Activated naive CD4-positive, alpha-beta T cell treated with anti-CD3 and anti-CD28 coated beads, Interleukin-2, amount 10 ng/mL, durations not matched to agents 7 days and 5 days (primary cell): ENCODE measurements at regions of chr20 and their contacts with region 1.

Region 1: GRCh38 chr20:41136680-41137613 is at the start of gene PLCG1:
- DNase-seq: peak; percentile 88
- H3K4me3 Mint-ChIP-seq: peak within 1 kb of the TSS; percentile 84
- H3K27ac Mint-ChIP-seq: peak within 1 kb of the TSS; percentile 92
- H3K4me1 Mint-ChIP-seq: peaks cover 54% of the 10 kb centered on the region
- H3K27me3 Mint-ChIP-seq: no peaks in the 10 kb centered on the region

Region 2: GRCh38 chr20:40990542-40991120 is 146.3 kb before region 1 on chr20:
- CTCF ChIA-PET with region 1: interaction called, 20 read pairs
- DNase-seq: peak; percentile 80
- H3K4me3 Mint-ChIP-seq: no peak overlapping the region
- H3K27ac Mint-ChIP-seq: peak overlapping the region; percentile 71
- H3K4me1 Mint-ChIP-seq: peaks cover 42% of the 10 kb centered on the region
- H3K27me3 Mint-ChIP-seq: peaks cover 2% of the 10 kb centered on the region

Region 3: GRCh38 chr20:41125530-41126457 is 11.2 kb before region 1 on chr20:
- CTCF ChIA-PET with region 1: interaction called, 12 read pairs
- DNase-seq: no peak
- H3K4me3 Mint-ChIP-seq: no peak overlapping the region
- H3K27ac Mint-ChIP-seq: peak overlapping the region; percentile 13
- H3K4me1 Mint-ChIP-seq: peaks cover 10% of the 10 kb centered on the region
- H3K27me3 Mint-ChIP-seq: no peaks in the 10 kb centered on the region

Region 4: DNA sequence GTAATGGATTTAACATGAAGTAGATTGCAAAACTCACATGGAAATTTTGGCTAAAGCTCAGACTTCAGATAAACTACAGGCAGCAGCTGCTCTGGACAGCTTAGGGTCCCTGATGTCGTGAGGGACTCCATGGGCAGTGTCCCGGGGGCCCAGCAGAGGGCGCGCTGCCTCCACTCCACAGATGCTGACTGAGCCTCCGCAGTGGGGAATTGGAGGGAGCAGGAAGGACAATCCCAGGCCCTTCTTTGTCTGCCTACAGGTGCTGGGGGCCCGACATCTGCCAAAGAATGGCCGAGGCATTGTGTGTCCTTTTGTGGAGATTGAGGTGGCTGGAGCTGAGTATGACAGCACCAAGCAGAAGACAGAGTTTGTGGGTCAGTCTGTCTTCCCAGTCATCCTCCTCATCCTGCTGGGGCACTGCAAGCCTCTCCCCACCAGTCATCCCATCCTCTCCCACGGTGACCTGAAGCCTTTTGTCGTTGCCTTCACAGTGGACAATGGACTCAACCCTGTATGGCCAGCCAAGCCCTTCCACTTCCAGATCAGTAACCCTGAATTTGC is 36.3 kb after region 1 on chr20:
- CTCF ChIA-PET with region 1: interaction called, 26 read pairs
- DNase-seq: peak; percentile 73
- H3K4me3 Mint-ChIP-seq: no peak overlapping the region
- H3K27ac Mint-ChIP-seq: peak overlapping the region; percentile 75
- H3K4me1 Mint-ChIP-seq: peaks cover 22% of the 10 kb centered on the region
- H3K27me3 Mint-ChIP-seq: no peaks in the 10 kb centered on the region

Region 5: GRCh38 chr20:41218466-41218865 is 81.5 kb after region 1 on chr20:
- CTCF ChIA-PET with region 1: interaction called, 10 read pairs
- DNase-seq: no peak
- H3K4me3 Mint-ChIP-seq: no peak overlapping the region
- H3K27ac Mint-ChIP-seq: no peak overlapping the region
- H3K4me1 Mint-ChIP-seq: no peaks in the 10 kb centered on the region
- H3K27me3 Mint-ChIP-seq: peaks cover 6% of the 10 kb centered on the region

Region 6: DNA sequence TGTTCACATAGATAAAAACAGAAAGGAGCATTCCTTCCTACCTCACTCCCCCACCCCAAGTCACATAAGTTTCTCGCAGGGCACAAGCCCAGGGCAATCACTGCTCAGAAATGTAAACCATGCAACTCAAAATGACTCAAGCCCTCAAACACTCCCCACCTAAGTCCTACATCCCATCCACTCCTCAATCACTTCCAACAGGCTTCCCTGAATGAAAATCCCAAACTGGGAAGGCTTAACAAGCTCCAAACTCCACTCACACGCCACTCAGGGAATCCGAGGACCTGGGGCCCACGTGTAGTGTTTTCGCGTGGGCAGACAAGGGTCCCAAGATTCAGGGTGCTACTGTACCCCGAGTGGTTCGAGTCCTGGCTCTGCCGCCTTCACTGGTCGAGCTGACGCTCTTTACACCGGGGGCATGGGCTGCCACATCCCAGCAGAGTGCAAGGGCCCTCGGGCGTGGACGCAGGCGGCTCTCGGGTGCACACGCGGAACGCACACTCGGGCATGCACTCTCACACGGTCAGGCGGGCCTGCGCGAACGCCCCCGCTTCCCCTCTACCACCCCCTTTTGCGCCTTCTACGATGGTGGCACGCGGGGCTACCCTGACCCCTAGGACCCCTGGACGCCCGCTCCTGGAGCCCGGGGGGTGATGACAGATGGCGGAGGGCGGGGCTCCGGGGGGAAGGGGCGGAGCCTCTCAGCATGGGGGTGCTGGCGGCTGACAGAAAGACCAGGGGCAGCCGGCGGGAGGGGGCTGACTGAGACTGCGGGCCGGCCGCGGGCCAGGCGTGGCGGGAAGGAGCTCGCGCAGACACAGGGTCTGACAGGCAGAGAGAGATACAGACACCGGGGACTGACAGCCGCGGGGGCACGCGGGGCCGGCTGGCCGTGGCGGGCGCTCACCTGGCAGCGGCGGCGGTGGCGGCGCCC is 179.9 kb after region 1 on chr20:
- CTCF ChIA-PET with region 1: no interaction called
- DNase-seq: peak; percentile 86
- H3K4me3 Mint-ChIP-seq: peak overlapping the region; percentile 73
- H3K27ac Mint-ChIP-seq: peak overlapping the region; percentile 83
- H3K4me1 Mint-ChIP-seq: peaks cover 28% of the 10 kb centered on the region
- H3K27me3 Mint-ChIP-seq: peaks cover 18% of the 10 kb centered on the region

Region 7: DNA sequence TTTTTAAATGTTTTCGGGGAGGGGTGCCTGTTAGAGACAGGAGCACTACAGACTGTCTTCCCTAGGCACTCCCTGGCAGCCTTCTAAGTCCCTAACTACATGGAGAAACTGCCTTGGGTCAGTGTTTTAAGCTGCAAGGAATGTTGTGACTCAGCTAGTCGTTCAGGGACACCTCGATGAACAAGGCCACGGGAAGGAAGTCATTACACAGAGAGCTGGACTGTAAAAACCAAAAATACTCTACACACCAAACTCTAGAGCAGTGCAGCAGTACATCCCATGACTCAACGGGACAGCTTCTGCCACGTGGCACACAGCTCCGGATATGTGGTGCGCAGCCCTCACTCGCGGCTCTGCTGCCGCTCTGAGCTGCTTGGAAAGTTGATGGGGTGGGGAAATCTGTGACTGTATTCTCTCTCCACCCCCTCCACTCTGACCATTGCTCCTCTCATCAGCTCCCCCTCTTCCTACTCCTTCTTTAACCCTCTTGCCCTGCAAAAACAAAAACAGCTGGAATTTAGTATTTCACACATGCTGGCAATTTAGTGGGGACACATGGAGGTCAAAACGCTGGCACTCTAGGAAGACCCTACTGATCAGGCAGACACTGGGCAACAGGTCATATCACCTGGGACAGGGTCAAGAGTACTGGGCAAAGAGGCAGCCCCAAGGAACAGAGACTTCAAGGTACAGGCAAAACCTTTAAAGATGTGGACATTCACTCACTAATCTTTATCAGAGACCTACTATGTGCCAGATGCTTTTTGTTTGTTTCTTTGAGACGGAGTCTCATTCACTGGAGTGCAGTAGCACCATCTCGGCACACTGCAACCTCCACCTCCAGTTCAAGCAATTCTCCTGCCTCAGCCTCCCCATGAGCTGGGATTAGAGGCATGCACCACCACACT is 192.7 kb after region 1 on chr20:
- CTCF ChIA-PET with region 1: interaction called, 15 read pairs
- DNase-seq: peak; percentile 69
- H3K4me3 Mint-ChIP-seq: no peak overlapping the region
- H3K27ac Mint-ChIP-seq: no peak overlapping the region
- H3K4me1 Mint-ChIP-seq: peaks cover 13% of the 10 kb centered on the region
- H3K27me3 Mint-ChIP-seq: peaks cover 12% of the 10 kb centered on the region